ENCODE measurements at regions of chr1 and their contacts with region 1.

Region 1: GRCh38 chr1:68442822-68443556 is 6.8 kb downstream of the RPE65 start:
- DNase-seq: peak; percentile 36
- H3K4me3 ChIP-seq: no peak overlapping the region
- H3K27ac ChIP-seq: no peak overlapping the region
- H3K27me3 ChIP-seq: no peaks in the 10 kb centered on the region
- CTCF ChIP-seq: peak; percentile 81

Region 2: GRCh38 chr1:67853704-67854103 is 589.3 kb before region 1 on chr1:
- CTCF ChIA-PET with region 1: interaction called, 11 read pairs
- POLR2A ChIA-PET with region 1: no interaction called
- DNase-seq: no peak
- H3K4me3 ChIP-seq: no peak overlapping the region
- H3K27ac ChIP-seq: no peak overlapping the region
- H3K27me3 ChIP-seq: no peaks in the 10 kb centered on the region
- CTCF ChIP-seq: peak; percentile 99

Region 3: DNA sequence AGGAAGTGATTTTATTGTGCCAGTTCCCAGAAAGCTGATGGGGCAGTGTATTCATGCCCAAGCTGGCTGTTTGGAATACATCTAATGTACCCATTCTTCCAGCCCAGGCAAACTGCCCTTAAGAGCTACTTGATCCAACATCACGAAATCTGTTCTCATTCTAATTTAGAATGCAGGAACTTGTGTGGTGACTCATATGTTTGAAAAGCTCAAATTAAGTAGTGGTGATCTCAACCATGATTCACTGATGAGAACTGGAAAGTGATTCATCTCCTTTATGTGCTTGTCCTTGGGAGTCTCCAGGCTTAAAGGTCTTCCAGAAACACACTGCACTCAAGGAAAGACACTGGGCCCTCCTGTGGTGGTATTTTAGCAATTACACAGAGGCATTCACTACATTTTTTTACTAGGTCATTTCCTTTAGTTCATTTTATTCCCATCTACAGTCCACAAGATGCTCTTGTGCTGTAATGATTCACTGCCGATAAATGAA is 58.6 kb before region 1 on chr1:
- CTCF ChIA-PET with region 1: interaction called, 10 read pairs
- POLR2A ChIA-PET with region 1: no interaction called
- DNase-seq: peak; percentile 96
- H3K4me3 ChIP-seq: no peak overlapping the region
- H3K27ac ChIP-seq: peak overlapping the region; percentile 88
- H3K27me3 ChIP-seq: no peaks in the 10 kb centered on the region
- CTCF ChIP-seq: peak; percentile 67

Region 4: GRCh38 chr1:68421350-68421749 is 21.6 kb before region 1 on chr1:
- CTCF ChIA-PET with region 1: interaction called, 13 read pairs
- POLR2A ChIA-PET with region 1: no interaction called
- DNase-seq: no peak
- H3K4me3 ChIP-seq: no peak overlapping the region
- H3K27ac ChIP-seq: no peak overlapping the region
- H3K27me3 ChIP-seq: no peaks in the 10 kb centered on the region
- CTCF ChIP-seq: no peak

Region 5: GRCh38 chr1:68454534-68454933 is 11.5 kb after region 1 on chr1:
- CTCF ChIA-PET with region 1: interaction called, 94 read pairs
- POLR2A ChIA-PET with region 1: no interaction called
- DNase-seq: no peak
- H3K4me3 ChIP-seq: no peak overlapping the region
- H3K27ac ChIP-seq: no peak overlapping the region
- H3K27me3 ChIP-seq: no peaks in the 10 kb centered on the region
- CTCF ChIP-seq: no peak

Region 6: DNA sequence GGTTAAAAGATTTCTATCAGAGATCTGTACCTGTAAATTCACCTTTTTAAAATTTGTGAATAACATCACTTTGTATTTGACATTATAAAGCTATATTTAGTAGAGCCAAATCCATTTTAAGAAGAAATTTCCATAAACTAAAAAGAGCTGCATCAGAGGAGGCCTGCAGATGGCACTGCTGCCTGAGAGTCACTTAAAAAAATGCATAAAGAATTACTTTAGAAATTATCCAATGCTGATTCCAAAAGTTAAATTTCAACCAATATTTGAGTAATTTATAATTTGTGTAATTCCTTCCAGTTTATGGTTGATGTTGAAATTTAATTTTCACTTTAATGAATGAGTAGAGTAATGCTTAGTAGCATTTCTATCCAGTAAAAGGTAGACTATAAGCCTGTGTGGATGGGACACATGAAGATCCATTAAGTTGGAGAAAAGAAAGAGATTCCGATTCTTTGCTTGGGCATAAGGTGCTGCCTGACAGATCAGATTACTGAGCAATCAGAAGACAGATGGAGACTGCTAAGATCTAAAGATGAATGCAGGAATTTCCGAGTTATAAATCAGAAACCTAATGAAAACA is 27.5 kb after region 1 on chr1:
- CTCF ChIA-PET with region 1: interaction called, 15 read pairs
- POLR2A ChIA-PET with region 1: no interaction called
- DNase-seq: no peak
- H3K4me3 ChIP-seq: no peak overlapping the region
- H3K27ac ChIP-seq: no peak overlapping the region
- H3K27me3 ChIP-seq: no peaks in the 10 kb centered on the region
- CTCF ChIP-seq: peak; percentile 82

Region 7: GRCh38 chr1:68565923-68566322 is 122.9 kb after region 1 on chr1:
- CTCF ChIA-PET with region 1: no interaction called
- POLR2A ChIA-PET with region 1: no interaction called
- DNase-seq: no peak
- H3K4me3 ChIP-seq: no peak overlapping the region
- H3K27ac ChIP-seq: no peak overlapping the region
- H3K27me3 ChIP-seq: no peaks in the 10 kb centered on the region
- CTCF ChIP-seq: no peak

Region 8: GRCh38 chr1:69686367-69686984 is 1243.5 kb after region 1 on chr1:
- CTCF ChIA-PET with region 1: no interaction called
- POLR2A ChIA-PET with region 1: no interaction called
- DNase-seq: no peak
- H3K4me3 ChIP-seq: no peak overlapping the region
- H3K27ac ChIP-seq: no peak overlapping the region
- H3K27me3 ChIP-seq: no peaks in the 10 kb centered on the region
- CTCF ChIP-seq: no peak

Measured in AG04450 (cell line).